PC-3 (cell line): ENCODE measurements at regions of chr19 and their contacts with region 1.

Region 1: DNA sequence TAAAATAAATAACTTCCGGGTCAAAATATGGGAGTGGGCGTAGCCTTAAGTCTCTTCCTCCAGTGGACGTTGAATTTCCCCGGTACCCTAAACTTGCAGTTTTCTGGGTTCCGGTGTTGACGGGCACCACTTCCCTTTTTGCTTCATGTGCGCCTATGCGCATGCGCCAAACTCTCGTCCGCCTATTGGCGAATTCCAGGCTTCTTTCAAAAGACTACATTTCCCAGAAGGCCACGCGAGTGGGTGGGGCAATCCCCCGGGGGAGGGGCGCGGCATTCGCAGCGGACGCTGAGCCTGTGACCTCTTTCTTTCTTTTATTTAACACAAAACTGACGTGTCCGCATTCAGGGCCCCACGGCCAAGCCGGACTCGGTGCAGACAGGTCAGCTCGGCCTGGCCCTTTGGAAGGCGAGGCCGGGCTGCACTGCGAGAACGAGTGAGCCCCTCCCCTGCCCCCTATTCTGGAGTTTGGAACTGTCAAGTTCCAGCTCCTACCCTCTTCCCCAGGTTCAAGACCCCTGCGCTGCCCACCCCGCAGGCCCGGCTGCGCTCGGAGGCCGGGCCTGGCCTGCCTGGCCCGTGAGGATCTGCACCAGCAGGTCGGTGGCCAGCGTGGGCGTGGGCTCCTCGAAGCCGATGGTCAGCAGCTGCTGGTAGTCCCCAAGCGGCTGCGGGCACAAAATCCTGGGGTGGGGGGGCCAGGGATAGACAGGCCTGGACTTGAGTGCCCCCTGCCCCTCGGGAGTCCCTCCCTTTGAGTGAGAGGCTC is 4.1 kb downstream of the C19orf67 start:
- DNase-seq: peak; percentile 100
- ATAC-seq: peak; percentile 93
- H3K4me3 ChIP-seq: peak overlapping the region; percentile 87
- H3K27ac ChIP-seq: peak overlapping the region; percentile 31
- H3K4me1 ChIP-seq: peaks cover 15% of the 10 kb centered on the region
- H3K27me3 ChIP-seq: no peaks in the 10 kb centered on the region
- CTCF ChIP-seq: no peak

Region 2: DNA sequence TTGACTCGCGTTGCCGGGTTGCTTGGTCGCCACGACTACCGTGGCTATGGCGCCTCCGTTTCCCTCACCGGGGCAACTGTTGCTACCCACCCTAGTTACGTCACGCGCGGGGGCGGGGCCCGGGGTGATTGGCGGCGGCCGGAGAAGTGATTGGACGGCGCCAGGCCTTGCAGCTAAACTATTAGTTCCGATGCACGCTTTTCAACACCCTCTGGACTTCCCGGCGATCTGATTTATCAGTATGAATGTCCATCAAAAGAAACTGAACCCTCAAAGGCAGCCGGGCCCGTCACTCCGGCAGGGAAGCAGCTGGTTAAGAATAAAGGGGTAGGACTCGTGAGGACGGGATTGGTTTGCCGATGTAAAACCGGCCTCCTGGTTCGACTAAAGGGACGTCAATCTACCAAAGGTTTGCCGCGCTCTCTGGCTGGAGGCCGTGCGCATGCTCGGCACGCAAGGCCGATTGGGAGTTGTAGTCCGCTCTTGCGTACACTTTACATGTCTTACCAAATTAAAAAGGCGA is 75.2 kb before region 1 on chr19 and contains the start of gene RFX1:
- CTCF ChIA-PET with region 1: no interaction called
- POLR2A ChIA-PET with region 1: interaction called, 3 read pairs
- intact Hi-C with region 1: loop called (anchors 2 kb)
- DNase-seq: peak; percentile 100
- ATAC-seq: peak; percentile 90
- H3K4me3 ChIP-seq: peak within 1 kb of the TSS; percentile 84
- H3K27ac ChIP-seq: peak within 1 kb of the TSS; percentile 91
- H3K4me1 ChIP-seq: peaks cover 13% of the 10 kb centered on the region
- H3K27me3 ChIP-seq: no peaks in the 10 kb centered on the region
- CTCF ChIP-seq: no peak
- total RNA-seq, gene RFX1: 7.5 and 9.2 TPM in 2 replicates